Uterus (tissue), 4 donors: ENCODE measurements at regions of chr12 and their contacts with region 1.

Region 1: GRCh38 chr12:45183246-45183645 is 32.6 kb upstream of the ANO6 start:
- DNase-seq: no peak
- H3K4me3 ChIP-seq: no peak overlapping the region
- H3K27ac ChIP-seq: no peak overlapping the region
- H3K4me1 ChIP-seq: no peaks in the 10 kb centered on the region
- H3K27me3 ChIP-seq: no peaks in the 10 kb centered on the region
- CTCF ChIP-seq: peak; percentile 37 to 60 (median 47)
- POLR2A ChIP-seq: no peak

Region 2: DNA sequence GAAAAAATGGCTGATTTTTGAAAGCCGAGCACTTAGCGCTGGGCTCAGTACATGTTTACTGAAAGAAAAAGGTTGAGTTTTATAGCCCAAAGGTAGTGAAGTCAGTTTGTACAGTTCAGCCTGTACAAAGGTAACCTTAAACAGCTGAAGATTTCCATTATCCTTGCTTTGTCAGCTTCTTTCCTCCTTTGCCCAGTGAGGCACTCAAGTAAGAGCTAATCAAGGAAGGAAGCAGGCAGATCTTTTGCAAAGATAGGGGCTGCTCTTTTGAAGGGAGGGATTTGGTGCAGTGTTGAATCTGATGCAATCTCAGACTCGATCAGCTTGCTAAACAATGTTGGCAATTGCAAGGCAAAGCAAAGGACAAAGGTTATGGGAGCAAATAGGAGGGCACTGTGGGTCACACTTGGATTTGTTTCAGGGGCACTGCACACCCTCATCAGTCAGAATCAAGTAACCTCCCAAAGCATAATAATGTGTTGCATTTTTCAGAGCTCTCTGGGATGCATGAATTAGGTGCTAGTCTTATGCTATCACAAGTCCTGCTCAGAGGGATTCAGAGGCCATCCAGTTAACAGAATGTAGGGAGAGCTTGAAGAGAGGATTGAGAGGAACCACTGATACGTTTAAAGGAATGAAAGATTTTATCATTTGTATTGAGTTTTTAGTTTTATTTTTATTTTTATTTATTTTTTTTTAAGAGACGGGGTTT is 77.0 kb after region 1 on chr12:
- intact Hi-C with region 1: no loop called
- DNase-seq: no peak
- H3K4me3 ChIP-seq: no peak overlapping the region
- H3K27ac ChIP-seq: no peak overlapping the region
- H3K4me1 ChIP-seq: peaks cover 3 to 4% of the 10 kb centered on the region in 2 donors
- H3K27me3 ChIP-seq: no peaks in the 10 kb centered on the region
- CTCF ChIP-seq: no peak
- POLR2A ChIP-seq: no peak

Region 3: DNA sequence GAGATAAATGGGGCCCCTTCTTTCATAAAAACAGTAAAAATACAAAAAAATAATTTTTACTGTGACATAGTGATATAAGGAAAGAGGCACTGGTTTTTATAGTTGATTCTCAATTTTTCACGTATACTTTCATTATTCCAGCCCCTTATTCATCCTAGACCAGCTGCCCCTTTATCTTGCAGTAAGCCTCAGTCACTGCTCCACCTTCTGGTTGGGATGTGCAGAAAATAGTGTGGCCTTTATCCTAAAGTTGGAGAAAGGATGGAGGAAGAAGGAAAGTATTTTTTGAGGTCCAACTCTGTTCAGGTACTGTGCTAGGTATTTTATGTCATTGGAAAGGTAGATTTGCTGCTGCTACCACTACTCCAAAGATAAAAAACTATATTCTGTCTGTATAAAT is 205.3 kb after region 1 on chr12:
- intact Hi-C with region 1: loop called (anchors 10 kb)
- DNase-seq: peak; percentile 35 to 51
- H3K4me3 ChIP-seq: no peak overlapping the region
- H3K27ac ChIP-seq: peak overlapping the region in 1 of 2 donors; percentile 1
- H3K4me1 ChIP-seq: no peaks in the 10 kb centered on the region
- H3K27me3 ChIP-seq: no peaks in the 10 kb centered on the region
- CTCF ChIP-seq: peak; percentile 54 to 72 (median 68)
- POLR2A ChIP-seq: no peak